ENCODE measurements at regions of chr2 and their contacts with region 1.

Region 1: GRCh38 chr2:8761529-8762164 is 75.8 kb downstream of the KIDINS220 start:
- DNase-seq: no peak
- H3K4me3 ChIP-seq: no peak overlapping the region
- CTCF ChIP-seq: peak; percentile 43

Region 2: DNA sequence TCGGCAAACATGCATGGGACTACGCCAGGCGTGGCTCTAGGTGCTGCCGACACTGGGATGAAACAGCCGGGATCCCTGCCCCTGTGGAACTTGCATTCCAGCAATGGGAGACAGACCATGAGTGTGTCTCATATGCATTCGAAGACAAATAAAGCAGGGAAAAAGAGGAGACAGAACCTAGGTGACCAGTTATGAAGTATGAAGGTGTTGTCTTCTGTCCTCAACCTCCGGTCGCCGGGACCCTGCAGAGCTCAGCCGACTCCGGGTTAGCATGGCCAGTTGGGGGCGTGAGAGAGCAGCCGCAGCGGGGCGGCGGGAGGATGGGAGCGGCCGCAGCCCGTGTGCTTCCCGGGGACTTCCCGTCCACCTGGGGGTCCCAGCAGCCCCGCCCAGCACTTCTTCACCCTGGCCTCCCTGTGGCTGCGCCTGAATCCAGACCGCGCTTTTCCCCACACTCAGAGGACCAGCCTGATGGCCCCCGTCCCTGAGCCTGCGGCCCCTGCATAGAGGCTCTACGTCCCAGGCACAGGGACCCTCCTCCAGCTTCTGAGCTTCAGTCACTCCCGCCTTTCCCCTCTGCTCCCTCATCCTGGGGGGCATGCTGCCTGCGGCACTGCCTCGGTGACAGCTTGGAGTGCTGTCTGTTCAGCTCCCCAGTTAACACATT is 68.4 kb before region 1 on chr2:
- CTCF ChIA-PET with region 1: interaction called, 11 read pairs
- POLR2A ChIA-PET with region 1: no interaction called
- DNase-seq: no peak
- H3K4me3 ChIP-seq: peak overlapping the region; percentile 30; the same call in 1 of the 2 replicates
- CTCF ChIP-seq: peak; percentile 60